A673 (cell line): ENCODE measurements at regions of chr2 and their contacts with region 1.

Region 1: GRCh38 chr2:56671973-56672571 is 488.3 kb downstream of the CCDC85A start:
- DNase-seq: peak; percentile 37
- H3K4me3 ChIP-seq: no peak overlapping the region
- H3K27ac ChIP-seq: no peak overlapping the region
- H3K4me1 ChIP-seq: peaks cover 4% of the 10 kb centered on the region
- H3K27me3 ChIP-seq: no peaks in the 10 kb centered on the region
- CTCF ChIP-seq: peak; percentile 56

Region 2: DNA sequence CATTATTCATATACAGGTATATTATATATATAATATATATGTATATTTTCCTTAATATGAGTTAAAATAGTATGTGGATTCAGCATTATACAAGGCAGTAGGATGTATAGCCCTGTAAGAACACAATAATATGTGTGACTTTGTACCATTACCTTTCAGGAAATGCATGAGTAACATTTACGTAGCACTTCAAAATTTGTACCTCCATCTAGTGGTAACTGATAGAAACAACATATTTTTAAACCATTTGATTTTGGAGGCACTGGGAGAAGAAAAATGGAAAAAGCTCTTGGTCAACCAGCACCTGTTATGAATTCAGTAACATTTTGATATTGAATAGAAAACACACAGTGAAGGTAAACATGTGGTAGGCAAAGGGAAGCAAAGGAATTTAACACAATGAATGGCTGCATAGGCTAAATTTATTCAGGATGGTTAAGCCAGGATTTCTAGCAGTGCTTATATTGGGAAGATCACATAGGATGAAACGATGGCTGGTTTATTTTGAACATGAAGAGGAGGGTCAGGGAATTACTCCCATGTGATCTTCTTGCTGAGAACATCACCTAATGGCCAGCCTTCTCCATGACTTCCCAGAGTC is 77.2 kb after region 1 on chr2:
- CTCF ChIA-PET with region 1: no interaction called
- POLR2A ChIA-PET with region 1: no interaction called
- intact Hi-C with region 1: loop called (anchors 5 kb)
- DNase-seq: peak; percentile 49
- H3K4me3 ChIP-seq: no peak overlapping the region
- H3K27ac ChIP-seq: no peak overlapping the region
- H3K4me1 ChIP-seq: no peaks in the 10 kb centered on the region
- H3K27me3 ChIP-seq: no peaks in the 10 kb centered on the region
- CTCF ChIP-seq: peak; percentile 63